Activated naive CD4-positive, alpha-beta T cell treated with anti-CD3 and anti-CD28 coated beads for 36 hours (primary cell): ENCODE measurements at regions of chr11 and their contacts with region 1.

Region 1: GRCh38 chr11:35050541-35050995 is 88.4 kb upstream of the CD44 start:
- DNase-seq: no peak
- H3K4me3 Mint-ChIP-seq: peak overlapping the region; percentile 74
- H3K27ac Mint-ChIP-seq: peak overlapping the region; percentile 87
- H3K4me1 Mint-ChIP-seq: peaks cover 69% of the 10 kb centered on the region
- H3K27me3 Mint-ChIP-seq: no peaks in the 10 kb centered on the region

Region 2: DNA sequence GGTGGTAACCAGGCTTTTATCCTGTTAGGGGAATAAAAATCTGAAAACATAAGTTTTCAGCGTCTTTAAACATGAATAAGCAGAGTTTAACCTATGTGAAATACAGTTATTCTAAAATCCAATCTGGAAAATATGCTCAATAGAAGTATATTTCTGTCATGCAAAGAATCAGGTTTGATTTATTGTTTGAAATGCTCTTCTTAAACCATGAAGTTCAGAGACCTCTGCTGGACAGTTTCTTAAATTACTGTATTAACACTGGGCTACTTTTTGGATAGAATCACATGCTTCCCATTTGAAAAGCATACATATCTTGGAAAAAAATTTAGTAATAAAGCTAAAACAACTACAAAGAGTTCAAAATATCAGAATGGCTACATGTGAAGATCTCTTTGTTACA is 159.8 kb before region 1 on chr11:
- CTCF ChIA-PET with region 1: no interaction called
- intact Hi-C with region 1: no loop called
- DNase-seq: no peak
- H3K4me3 Mint-ChIP-seq: no peak overlapping the region
- H3K27ac Mint-ChIP-seq: no peak overlapping the region
- H3K4me1 Mint-ChIP-seq: no peaks in the 10 kb centered on the region
- H3K27me3 Mint-ChIP-seq: no peaks in the 10 kb centered on the region

Region 3: GRCh38 chr11:35030716-35031213 is 19.8 kb before region 1 on chr11:
- CTCF ChIA-PET with region 1: no interaction called
- intact Hi-C with region 1: no loop called
- DNase-seq: peak; percentile 55
- H3K4me3 Mint-ChIP-seq: peak overlapping the region; percentile 59
- H3K27ac Mint-ChIP-seq: peak overlapping the region; percentile 93
- H3K4me1 Mint-ChIP-seq: peaks cover 44% of the 10 kb centered on the region
- H3K27me3 Mint-ChIP-seq: no peaks in the 10 kb centered on the region

Region 4: GRCh38 chr11:35066783-35067423 is 16.3 kb after region 1 on chr11:
- CTCF ChIA-PET with region 1: interaction called, 7 read pairs
- intact Hi-C with region 1: loop called (anchors 1 kb)
- DNase-seq: peak; percentile 65
- H3K4me3 Mint-ChIP-seq: no peak overlapping the region
- H3K27ac Mint-ChIP-seq: peak overlapping the region; percentile 15
- H3K4me1 Mint-ChIP-seq: peaks cover 29% of the 10 kb centered on the region
- H3K27me3 Mint-ChIP-seq: no peaks in the 10 kb centered on the region